PC-9 (cell line): ENCODE measurements at regions of chr2 and their contacts with region 1.

Region 1: GRCh38 chr2:5020116-5020875 is 671.9 kb upstream of the SOX11 start:
- DNase-seq: no peak
- H3K4me3 ChIP-seq: no peak overlapping the region
- H3K27ac ChIP-seq: no peak overlapping the region
- H3K4me1 ChIP-seq: no peaks in the 10 kb centered on the region
- H3K27me3 ChIP-seq: no peaks in the 10 kb centered on the region
- CTCF ChIP-seq: no peak

Region 2: DNA sequence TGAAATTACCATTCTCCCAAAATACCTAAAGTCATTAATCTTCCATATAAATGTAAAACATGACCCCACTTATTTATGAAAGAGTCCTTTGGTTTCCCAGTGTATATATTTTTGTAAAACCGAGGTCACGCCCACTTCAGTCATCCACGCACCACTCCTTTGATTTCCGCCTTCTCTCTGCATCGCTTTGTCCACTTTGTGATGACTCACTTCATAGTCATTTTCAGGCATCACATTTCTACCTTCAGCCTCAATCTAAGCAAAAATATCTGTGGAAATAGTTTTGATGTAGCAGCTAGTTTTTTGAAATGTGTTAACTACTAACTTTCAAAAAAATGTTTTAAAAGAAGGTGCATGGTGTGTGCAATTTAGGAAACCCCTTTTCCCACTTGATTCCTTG is 121.6 kb before region 1 on chr2:
- CTCF ChIA-PET with region 1: no interaction called
- POLR2A ChIA-PET with region 1: no interaction called
- intact Hi-C with region 1: no loop called
- DNase-seq: peak; percentile 13 to 52
- H3K4me3 ChIP-seq: no peak overlapping the region
- H3K27ac ChIP-seq: no peak overlapping the region
- H3K4me1 ChIP-seq: no peaks in the 10 kb centered on the region
- H3K27me3 ChIP-seq: no peaks in the 10 kb centered on the region
- CTCF ChIP-seq: no peak

Region 3: GRCh38 chr2:5695981-5696745 is 675.9 kb after region 1 on chr2:
- CTCF ChIA-PET with region 1: no interaction called
- POLR2A ChIA-PET with region 1: interaction called, 10 read pairs
- intact Hi-C with region 1: no loop called
- DNase-seq: no peak
- H3K4me3 ChIP-seq: no peak overlapping the region
- H3K27ac ChIP-seq: no peak overlapping the region
- H3K4me1 ChIP-seq: no peaks in the 10 kb centered on the region
- H3K27me3 ChIP-seq: no peaks in the 10 kb centered on the region; the same call in 1 of the 2 replicates
- CTCF ChIP-seq: no peak